ENCODE measurements at regions of chr17 and their contacts with region 1.

Region 1: DNA sequence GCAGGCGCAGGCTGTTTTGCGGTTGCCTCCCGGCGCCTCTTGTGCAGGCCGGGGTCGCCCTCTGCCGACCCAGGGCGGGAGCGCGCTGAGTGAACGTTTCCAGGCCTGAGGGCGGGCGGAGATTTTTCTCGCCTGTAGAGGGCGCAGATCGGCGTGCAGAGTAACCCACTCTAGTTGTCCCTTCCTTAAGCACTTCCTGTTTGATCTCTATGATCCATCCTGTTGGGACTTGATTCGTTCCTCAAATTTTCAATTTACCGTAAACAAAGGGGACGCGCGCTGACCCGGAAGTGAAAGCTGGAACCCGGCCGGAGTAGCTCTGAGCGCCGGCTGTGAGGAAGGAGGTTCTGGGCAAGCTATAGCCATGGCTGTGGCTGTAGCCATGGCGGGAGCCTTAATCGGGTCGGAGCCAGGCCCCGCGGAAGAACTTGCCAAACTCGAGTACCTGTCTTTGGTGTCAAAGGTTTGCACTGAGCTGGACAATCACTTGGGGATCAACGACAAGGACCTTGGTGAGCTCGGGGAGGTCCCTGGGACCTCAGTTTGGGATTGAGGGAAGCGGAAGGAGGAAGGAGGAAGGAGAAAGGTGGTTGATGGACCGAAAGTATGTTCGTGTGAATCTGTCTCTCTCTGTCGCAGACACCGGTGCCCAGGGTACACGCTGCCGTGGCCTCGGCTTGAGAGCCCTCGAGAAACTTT is at the start of gene DHX8:
- DNase-seq: peak; percentile 98 to 99 (median 98)
- H3K4me3 ChIP-seq: peak within 1 kb of the TSS; percentile 96
- H3K4me3 Mint-ChIP-seq: peak within 1 kb of the TSS; percentile 98 to 100 (median 100)
- H3K27ac ChIP-seq: peak within 1 kb of the TSS; percentile 88
- H3K27ac Mint-ChIP-seq: peak within 1 kb of the TSS; percentile 85 to 99 (median 98)
- H3K4me1 ChIP-seq: peaks cover 29% of the 10 kb centered on the region
- H3K4me1 Mint-ChIP-seq: peaks cover 30 to 47% (median 41%) of the 10 kb centered on the region in 3 donors
- H3K27me3 ChIP-seq: no peaks in the 10 kb centered on the region
- H3K27me3 Mint-ChIP-seq: peaks cover 0 to 1% of the 10 kb centered on the region in 2 donors
- total RNA-seq, gene DHX8: 64.8 to 70.8 TPM

Region 2: GRCh38 chr17:43388359-43389045 is 95.3 kb before region 1 on chr17:
- CTCF ChIA-PET with region 1: interaction called, 130 read pairs
- POLR2A ChIA-PET with region 1: interaction called, 29 read pairs
- DNase-seq: peak; percentile 83 to 95 (median 91)
- H3K4me3 ChIP-seq: peak overlapping the region; percentile 84
- H3K4me3 Mint-ChIP-seq: peak overlapping the region; percentile 90 to 99 (median 95)
- H3K27ac ChIP-seq: peak overlapping the region; percentile 94
- H3K27ac Mint-ChIP-seq: peak overlapping the region; percentile 94 to 99 (median 98)
- H3K4me1 ChIP-seq: peaks cover 18% of the 10 kb centered on the region
- H3K4me1 Mint-ChIP-seq: peaks cover 26 to 35% (median 30%) of the 10 kb centered on the region in 3 donors
- H3K27me3 ChIP-seq: no peaks in the 10 kb centered on the region
- H3K27me3 Mint-ChIP-seq: no peaks in the 10 kb centered on the region

Region 3: DNA sequence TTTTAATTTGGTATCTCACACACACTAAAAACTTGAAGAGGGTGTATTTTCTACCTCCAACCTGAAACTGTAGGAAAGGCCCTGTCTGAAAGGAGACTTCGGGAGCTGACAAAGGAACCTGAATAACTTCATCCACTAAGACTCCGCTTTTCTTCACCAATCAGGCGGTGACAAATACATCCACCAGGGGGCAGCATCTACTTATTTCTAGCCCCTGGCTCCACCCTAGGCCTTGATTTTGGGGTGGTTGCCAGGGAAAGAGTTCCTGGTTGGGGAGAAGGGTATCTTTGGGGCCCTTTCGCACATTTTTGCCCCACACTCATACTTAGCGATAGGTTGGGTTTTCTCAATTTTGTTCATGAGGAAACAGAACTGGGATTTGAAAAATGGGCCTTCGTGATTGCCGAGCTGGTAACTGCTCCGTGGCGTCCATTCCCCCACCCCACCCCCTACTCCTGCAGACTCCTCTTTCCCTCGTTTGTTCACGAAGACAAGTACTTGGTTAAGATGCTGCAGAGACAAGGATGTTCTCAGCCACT is 89.8 kb before region 1 on chr17:
- CTCF ChIA-PET with region 1: interaction called, 130 read pairs
- POLR2A ChIA-PET with region 1: interaction called, 29 read pairs
- DNase-seq: peak; percentile 78 to 91 (median 85)
- H3K4me3 ChIP-seq: no peak overlapping the region
- H3K4me3 Mint-ChIP-seq: peak overlapping the region in 1 of 7 donors; percentile 76
- H3K27ac ChIP-seq: no peak overlapping the region
- H3K27ac Mint-ChIP-seq: peak overlapping the region in 5 of 8 donors; percentile 5 to 78 (median 52)
- H3K4me1 ChIP-seq: peaks cover 23% of the 10 kb centered on the region
- H3K4me1 Mint-ChIP-seq: peaks cover 27 to 35% (median 31%) of the 10 kb centered on the region in 3 donors
- H3K27me3 ChIP-seq: no peaks in the 10 kb centered on the region
- H3K27me3 Mint-ChIP-seq: no peaks in the 10 kb centered on the region

Region 4: GRCh38 chr17:43536236-43536992 is 52.6 kb after region 1 on chr17:
- CTCF ChIA-PET with region 1: no interaction called
- POLR2A ChIA-PET with region 1: no interaction called
- DNase-seq: no peak
- H3K4me3 ChIP-seq: no peak overlapping the region
- H3K4me3 Mint-ChIP-seq: no peak overlapping the region
- H3K27ac ChIP-seq: no peak overlapping the region
- H3K27ac Mint-ChIP-seq: peak overlapping the region in 1 of 8 donors; percentile 77
- H3K4me1 ChIP-seq: no peaks in the 10 kb centered on the region
- H3K4me1 Mint-ChIP-seq: no peaks in the 10 kb centered on the region
- H3K27me3 ChIP-seq: no peaks in the 10 kb centered on the region
- H3K27me3 Mint-ChIP-seq: peaks cover 0 to 2% of the 10 kb centered on the region in 2 donors

Region 5: DNA sequence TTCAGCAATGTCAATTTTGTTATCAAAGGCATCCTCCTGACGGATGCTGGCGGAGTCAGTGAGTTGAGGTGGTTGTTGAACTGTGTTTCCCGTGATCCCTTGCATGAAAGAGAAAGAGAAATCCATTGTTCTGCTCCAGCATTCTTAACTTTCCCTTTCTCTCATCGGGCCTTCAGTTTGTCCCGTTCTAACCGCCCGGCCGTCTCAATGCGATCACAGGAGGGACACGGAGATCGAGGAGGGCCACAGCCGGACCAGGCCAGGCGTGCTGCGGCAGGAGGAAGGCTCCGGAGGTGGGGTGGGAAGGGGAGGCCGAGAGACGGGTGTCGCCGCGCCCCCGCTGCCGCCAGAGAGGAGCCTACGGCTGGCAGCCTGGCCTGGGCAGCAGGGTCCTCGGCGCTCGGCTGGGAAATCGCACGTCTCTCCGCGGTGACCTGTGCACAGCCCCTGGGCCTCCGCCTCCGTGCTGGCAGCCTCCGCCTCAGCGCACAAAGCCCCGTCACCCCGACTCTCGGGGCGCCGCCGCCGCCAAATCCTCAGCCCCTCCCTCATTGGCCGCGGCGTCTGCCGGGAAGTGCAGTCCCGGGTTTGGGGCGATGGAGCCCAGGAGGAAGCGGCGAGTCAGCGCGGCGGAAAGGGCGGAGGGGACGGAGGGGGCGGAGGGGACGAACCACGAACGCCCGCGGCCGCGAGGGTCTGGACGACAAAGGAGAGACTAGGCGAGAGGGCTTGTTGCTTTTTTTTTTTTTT is 236.7 kb after region 1 on chr17:
- CTCF ChIA-PET with region 1: no interaction called
- POLR2A ChIA-PET with region 1: no interaction called
- DNase-seq: peak; percentile 55 to 79 (median 70)
- H3K4me3 ChIP-seq: peak overlapping the region; percentile 93
- H3K4me3 Mint-ChIP-seq: peak overlapping the region; percentile 90 to 99 (median 95)
- H3K27ac ChIP-seq: peak overlapping the region; percentile 75
- H3K27ac Mint-ChIP-seq: peak overlapping the region; percentile 90 to 98 (median 97)
- H3K4me1 ChIP-seq: peaks cover 8% of the 10 kb centered on the region
- H3K4me1 Mint-ChIP-seq: peaks cover 6 to 8% (median 8%) of the 10 kb centered on the region in 3 donors
- H3K27me3 ChIP-seq: no peaks in the 10 kb centered on the region
- H3K27me3 Mint-ChIP-seq: peaks cover 2 to 10% of the 10 kb centered on the region in 2 donors

Region 6: GRCh38 chr17:43871951-43872695 is 388.3 kb after region 1 on chr17:
- CTCF ChIA-PET with region 1: no interaction called
- POLR2A ChIA-PET with region 1: no interaction called
- DNase-seq: no peak
- H3K4me3 ChIP-seq: no peak overlapping the region
- H3K4me3 Mint-ChIP-seq: no peak overlapping the region
- H3K27ac ChIP-seq: no peak overlapping the region
- H3K27ac Mint-ChIP-seq: peak overlapping the region in 1 of 8 donors; percentile 63
- H3K4me1 ChIP-seq: no peaks in the 10 kb centered on the region
- H3K4me1 Mint-ChIP-seq: no peaks in the 10 kb centered on the region
- H3K27me3 ChIP-seq: no peaks in the 10 kb centered on the region
- H3K27me3 Mint-ChIP-seq: peaks cover 7 to 37% of the 10 kb centered on the region in 2 donors